Sigmoid colon (tissue), 7 donors: ENCODE measurements at regions of chr6 and their contacts with region 1.

Region 1: GRCh38 chr6:107957909-107958688 is at the start of gene SEC63:
- DNase-seq: peak; percentile 98
- H3K4me3 ChIP-seq: peak within 1 kb of the TSS; percentile 79 to 92 (median 90)
- H3K27ac ChIP-seq: peak within 1 kb of the TSS; percentile 87 to 95 (median 92)
- H3K4me1 ChIP-seq: peaks cover 0 to 32% (median 30%) of the 10 kb centered on the region in 4 donors
- H3K27me3 ChIP-seq: no peaks in the 10 kb centered on the region
- CTCF ChIP-seq: no peak
- EP300 ChIP-seq: no peak
- POLR2A ChIP-seq: peak; percentile 86 to 87
- total RNA-seq, gene SEC63: 31.7 to 44.9 (median 33.9) TPM

Region 2: DNA sequence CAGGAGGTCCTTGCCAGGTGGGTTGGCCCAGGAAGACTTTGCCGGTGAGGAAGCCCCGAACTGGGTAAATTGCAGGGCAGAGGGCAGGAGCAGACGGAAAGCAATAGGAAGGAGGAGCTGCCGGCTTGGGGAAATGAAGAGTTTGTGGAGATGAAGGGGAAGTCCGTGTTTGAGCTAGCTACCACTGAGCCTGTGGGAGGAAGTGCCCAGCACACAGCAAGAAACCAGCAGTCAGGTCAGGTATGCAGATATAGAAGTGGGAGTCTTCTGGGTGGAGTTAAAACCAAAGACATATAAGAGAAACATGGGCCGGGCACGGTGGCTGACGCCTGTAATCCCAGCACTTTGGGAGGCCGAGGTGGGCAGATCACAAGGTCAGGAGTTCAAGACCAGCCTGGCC is 1018.3 kb before region 1 on chr6:
- intact Hi-C with region 1: no loop called
- DNase-seq: no peak
- H3K4me3 ChIP-seq: no peak overlapping the region
- H3K27ac ChIP-seq: no peak overlapping the region
- H3K4me1 ChIP-seq: no peaks in the 10 kb centered on the region
- H3K27me3 ChIP-seq: no peaks in the 10 kb centered on the region
- CTCF ChIP-seq: no peak
- EP300 ChIP-seq: no peak
- POLR2A ChIP-seq: no peak

Region 3: DNA sequence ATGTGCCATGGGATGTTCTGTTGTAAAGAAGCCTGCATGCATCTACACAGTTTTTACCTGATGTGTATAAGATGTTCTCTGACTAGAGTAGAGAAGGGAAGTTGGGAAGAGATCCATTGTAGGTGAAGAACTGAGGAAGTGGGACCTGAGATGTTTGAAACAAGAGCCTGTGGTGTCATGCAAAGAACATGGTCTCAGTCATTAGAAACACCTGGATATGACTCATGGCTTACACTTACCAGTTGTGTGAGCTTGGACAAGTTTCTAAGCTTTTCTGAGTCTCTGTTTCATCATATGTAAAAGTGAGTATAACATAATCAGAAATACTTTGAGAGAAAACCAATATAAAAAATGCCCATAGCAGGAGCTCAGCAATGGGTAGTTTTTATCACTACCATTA is 51.8 kb after region 1 on chr6:
- intact Hi-C with region 1: no loop called
- DNase-seq: no peak
- H3K4me3 ChIP-seq: no peak overlapping the region
- H3K27ac ChIP-seq: no peak overlapping the region
- H3K4me1 ChIP-seq: no peaks in the 10 kb centered on the region
- H3K27me3 ChIP-seq: no peaks in the 10 kb centered on the region
- CTCF ChIP-seq: no peak
- EP300 ChIP-seq: no peak
- POLR2A ChIP-seq: no peak

Region 4: GRCh38 chr6:108622641-108623298 is 664.7 kb after region 1 on chr6:
- intact Hi-C with region 1: no loop called
- DNase-seq: peak; percentile 80
- H3K4me3 ChIP-seq: no peak overlapping the region
- H3K27ac ChIP-seq: peak overlapping the region; percentile 46 to 63 (median 58)
- H3K4me1 ChIP-seq: peaks cover 0 to 100% (median 88%) of the 10 kb centered on the region in 4 donors
- H3K27me3 ChIP-seq: no peaks in the 10 kb centered on the region
- CTCF ChIP-seq: no peak
- EP300 ChIP-seq: peak in 1 of 4 donors; percentile 33
- POLR2A ChIP-seq: no peak

Region 5: DNA sequence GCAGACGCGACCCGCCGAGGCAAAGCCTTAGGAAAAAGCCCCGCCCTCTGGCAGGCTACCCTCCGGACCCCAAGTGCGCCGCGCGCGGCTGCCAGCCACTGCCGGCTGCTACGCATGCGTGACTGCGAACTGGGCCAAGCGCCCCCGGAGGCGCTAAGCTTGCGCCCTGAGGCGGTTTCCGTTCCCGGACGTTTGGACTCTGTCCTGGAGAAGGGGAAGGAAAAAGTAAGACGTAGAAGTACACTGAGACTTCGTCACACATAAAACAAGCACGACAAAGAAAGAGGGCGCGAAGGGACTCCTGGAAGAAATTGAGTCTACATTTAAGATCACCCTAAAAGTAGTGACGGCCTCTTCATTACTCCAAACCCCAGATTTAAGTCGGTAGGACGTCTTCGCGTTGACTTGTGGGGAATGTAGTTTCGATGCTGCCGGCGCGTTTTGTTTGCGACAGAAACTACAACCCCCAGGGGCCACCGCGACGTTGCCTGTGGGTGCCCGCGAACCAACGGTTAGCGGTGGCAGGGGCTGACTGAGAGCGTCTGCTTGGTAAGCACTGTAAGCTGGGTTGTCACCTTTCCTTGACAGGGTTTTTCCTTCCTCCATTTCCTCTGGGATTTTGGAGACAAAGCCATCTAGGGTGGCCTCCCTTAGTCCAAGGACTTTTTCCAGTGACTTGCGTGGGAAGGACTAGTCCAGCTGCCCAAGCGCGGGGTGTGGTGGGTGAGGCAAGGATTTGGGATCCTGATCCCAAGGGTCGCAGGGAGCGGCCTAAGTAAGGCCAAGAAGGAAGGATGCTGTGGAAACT is 1137.1 kb after region 1 on chr6 and contains the start of gene CEP57L1:
- intact Hi-C with region 1: loop called (anchors 5 kb)
- DNase-seq: peak; percentile 99
- H3K4me3 ChIP-seq: peak within 1 kb of the TSS; percentile 71 to 77 (median 74)
- H3K27ac ChIP-seq: peak within 1 kb of the TSS; percentile 97 to 99 (median 98)
- H3K4me1 ChIP-seq: peaks cover 0 to 38% (median 26%) of the 10 kb centered on the region in 4 donors
- H3K27me3 ChIP-seq: no peaks in the 10 kb centered on the region
- CTCF ChIP-seq: no peak
- EP300 ChIP-seq: peak in 1 of 4 donors; percentile 19
- POLR2A ChIP-seq: peak; percentile 23 to 65
- total RNA-seq, gene CEP57L1: 12.6 to 21.0 (median 16.5) TPM